ENCODE measurements at regions of chr20 and their contacts with region 1.

Region 1: DNA sequence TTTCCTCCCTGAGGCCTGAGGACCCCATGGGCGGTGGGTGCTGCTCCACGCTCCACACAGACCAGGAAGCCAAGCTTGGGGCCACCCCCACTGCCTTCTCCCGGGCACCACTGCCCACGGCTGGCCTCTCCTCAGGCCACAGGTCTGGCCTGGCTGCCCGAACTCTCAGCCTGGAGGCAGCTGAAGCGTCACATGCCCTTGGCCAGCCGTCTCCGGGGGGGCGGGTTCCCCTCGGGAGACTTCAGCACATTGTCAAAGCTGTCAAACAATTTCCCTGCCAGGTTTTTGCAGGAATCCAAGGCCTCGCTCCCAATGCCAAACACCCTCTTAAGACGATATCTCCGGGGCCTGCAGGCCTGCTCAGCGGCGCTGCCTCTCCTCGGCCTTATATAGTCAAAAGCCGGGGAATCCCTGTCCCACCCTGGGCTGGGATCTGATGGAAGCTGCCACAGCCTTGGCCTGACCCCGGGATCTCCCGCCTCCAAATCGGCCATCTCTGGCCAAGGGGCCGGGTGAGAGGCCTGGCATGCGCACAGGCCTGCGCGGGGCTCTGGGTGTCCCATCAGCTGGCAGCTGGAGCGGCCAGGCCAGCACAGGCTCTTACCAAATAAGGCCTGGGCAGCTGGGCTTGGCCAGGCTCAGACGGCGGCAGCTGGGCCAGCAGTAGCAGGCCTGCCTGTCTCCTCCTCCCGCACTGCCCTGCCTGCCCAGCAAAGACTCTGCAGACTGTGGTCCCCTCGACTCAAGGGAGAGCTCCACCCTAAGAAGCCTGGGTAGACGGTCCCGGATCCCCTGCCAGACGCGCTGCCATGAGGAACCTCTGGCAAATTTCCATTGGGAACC is 49.7 kb downstream of the RBM38 start:
- DNase-seq: peak; percentile 94

Region 2: GRCh38 chr20:56839786-56840185 is 601.1 kb before region 1 on chr20:
- intact Hi-C with region 1: no loop called
- DNase-seq: no peak

Region 3: DNA sequence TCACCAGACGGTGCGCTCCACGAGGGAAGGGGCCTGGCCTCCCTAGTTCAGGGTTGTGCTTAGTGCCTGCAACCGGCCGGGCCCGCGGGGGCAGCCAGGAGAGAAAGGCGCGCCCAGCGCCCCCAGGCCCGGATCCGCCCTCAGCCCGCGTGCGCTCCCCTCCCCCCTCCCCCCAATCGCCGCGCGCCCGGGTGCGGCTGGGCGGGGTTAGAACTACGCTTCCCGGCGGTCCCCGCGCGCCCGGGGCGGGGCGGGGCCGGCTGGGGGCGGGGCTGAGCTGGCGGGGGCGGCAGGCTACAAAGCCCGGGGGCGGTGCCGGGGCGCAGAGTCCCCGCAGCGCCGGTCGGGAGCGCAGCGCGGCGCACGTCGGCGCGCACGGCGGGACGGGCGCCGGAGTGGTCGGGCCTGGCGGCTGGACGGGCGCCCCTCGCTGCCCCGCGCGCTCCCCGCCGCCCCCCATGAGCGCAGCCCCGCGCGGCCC is 49.8 kb before region 1 on chr20 and contains the start of gene RBM38:
- intact Hi-C with region 1: loop called (anchors 5 to 10 kb)
- DNase-seq: peak; percentile 90
- total RNA-seq, gene RBM38: 26.5 to 32.7 TPM

Region 4: GRCh38 chr20:57546956-57547649 is 106.2 kb after region 1 on chr20:
- intact Hi-C with region 1: no loop called
- DNase-seq: no peak

Region 5: GRCh38 chr20:57600320-57601210 is 159.7 kb after region 1 on chr20:
- intact Hi-C with region 1: no loop called
- DNase-seq: no peak

Region 6: GRCh38 chr20:57893366-57893999 is 452.6 kb after region 1 on chr20:
- intact Hi-C with region 1: no loop called
- DNase-seq: no peak

Measured in posterior vena cava (tissue), 2 donors.